Lower leg skin (tissue), 4 donors: ENCODE measurements at regions of chr6 and their contacts with region 1.

Region 1: GRCh38 chr6:110179401-110180227 is at the start of gene WASF1:
- DNase-seq: peak; percentile 95 to 99
- H3K4me3 ChIP-seq: peak within 1 kb of the TSS; percentile 90
- CTCF ChIP-seq: no peak
- POLR2A ChIP-seq: no peak
- total RNA-seq, gene WASF1: 3.2 to 8.6 (median 7.6) TPM

Region 2: DNA sequence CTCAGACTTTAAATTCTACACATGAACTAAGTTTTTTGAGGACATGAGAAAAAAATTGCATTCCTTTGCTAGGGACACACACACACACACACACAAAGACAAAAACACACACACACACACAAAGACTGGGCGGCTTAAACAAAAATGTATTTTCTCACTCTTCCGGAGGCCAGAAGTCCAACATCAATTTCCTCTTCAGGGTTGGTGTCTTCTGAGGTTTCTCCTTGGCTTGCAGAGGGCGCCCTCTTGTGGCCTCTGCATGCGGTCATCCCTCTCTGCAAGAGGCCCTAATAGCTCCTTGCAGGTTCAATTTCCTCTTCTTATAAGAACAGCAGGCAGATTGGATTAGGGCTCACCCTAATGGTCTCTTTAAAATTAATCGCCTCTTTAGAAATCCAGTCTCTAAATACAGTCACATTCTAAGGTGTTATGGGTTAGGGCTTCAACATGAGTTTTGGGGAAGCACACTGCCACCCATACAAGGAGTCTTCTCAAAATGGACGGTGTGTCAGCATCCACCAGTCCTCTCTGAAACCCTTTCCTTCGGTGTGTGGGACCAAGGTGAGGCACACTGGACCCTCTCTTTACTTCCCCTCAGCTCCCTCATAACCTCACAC is 140.1 kb before region 1 on chr6:
- intact Hi-C with region 1: loop called (anchors 10 kb)
- DNase-seq: peak; percentile 86 to 97
- H3K4me3 ChIP-seq: no peak overlapping the region
- CTCF ChIP-seq: peak in 1 of 3 donors; percentile 73
- POLR2A ChIP-seq: no peak

Region 3: DNA sequence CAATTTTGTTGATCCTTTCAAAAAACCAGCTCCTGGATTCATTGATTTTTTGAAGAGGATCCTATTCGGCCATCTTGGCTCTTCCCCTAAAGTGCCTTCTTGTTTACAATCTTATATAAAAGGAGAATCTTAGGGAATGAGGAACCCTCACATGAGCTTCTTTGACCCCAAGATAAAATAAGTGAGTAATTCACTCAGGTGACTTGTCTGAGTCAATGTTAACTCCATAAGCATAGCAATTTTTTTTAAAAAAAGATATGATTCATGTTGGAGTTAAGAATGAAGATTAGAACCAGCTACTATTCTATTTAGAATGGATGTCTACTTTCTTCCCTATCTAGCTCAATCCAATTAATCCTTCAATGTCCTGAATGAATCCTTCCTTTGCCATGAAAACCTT is 21.1 kb before region 1 on chr6:
- intact Hi-C with region 1: no loop called
- DNase-seq: no peak
- H3K4me3 ChIP-seq: no peak overlapping the region
- CTCF ChIP-seq: no peak
- POLR2A ChIP-seq: no peak

Region 4: DNA sequence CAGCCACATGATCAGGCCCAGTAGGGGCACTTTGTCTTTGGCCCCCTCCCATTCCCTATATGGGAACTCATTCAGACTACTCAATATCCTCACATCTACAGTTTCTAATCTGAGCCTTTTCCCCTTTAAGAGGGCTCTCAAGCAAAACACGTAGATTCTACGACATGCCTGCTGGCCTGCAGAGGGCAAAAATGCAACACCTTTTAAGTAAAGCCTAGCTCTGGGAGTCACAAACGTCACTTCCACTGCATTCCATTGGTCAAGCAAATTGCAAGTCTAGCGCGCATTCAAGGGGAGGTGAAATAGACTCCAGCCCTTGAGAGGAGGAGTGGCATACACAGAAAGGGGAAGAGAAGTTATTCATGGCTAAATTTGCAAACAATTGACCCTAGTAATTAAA is 71.2 kb after region 1 on chr6:
- intact Hi-C with region 1: no loop called
- DNase-seq: no peak
- H3K4me3 ChIP-seq: no peak overlapping the region
- CTCF ChIP-seq: no peak
- POLR2A ChIP-seq: no peak